Activated B cell treated with CpG ODN at 0.5 μM for 24 hours (primary cell): ENCODE measurements at regions of chr2 and their contacts with region 1.

Region 1: GRCh38 chr2:98412751-98413458 is 31.8 kb upstream of the INPP4A start:
- DNase-seq: no peak
- ATAC-seq: peak; percentile 86
- H3K4me3 Mint-ChIP-seq: no peak overlapping the region
- H3K27ac Mint-ChIP-seq: no peak overlapping the region
- H3K4me1 Mint-ChIP-seq: no peaks in the 10 kb centered on the region
- H3K27me3 Mint-ChIP-seq: peaks cover 2% of the 10 kb centered on the region
- CTCF ChIP-seq: no peak

Region 2: DNA sequence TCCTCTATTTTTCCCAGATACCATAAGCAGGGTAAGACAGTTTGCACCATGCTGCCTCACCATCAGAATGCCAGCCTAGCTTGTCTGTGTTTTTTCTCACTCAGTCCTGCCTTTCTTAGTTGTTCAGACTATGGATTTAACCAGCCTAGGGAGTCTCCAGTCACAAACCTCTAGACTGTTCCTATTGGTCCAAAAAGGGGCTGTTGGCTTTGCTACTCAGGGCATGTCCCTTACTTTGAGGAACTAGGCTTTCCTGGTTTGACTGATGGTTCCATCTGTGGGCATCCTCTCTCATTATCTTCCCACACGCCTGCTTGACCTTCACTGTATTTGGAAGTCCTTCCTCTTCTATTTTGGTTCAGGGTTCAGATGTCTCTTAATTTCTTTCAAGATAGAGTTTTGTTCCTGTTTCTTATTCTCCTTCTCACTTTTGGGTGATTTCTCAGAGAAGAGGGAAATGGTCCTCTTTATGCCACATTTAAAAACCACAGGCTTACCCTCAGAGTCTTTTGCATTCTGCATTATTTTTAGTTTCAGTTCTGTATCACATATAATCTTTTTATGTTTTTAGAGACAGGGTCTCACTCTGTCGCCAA is 385.9 kb before region 1 on chr2:
- CTCF ChIA-PET with region 1: no interaction called
- POLR2A ChIA-PET with region 1: no interaction called
- intact Hi-C with region 1: no loop called
- DNase-seq: no peak
- ATAC-seq: peak; percentile 72
- H3K4me3 Mint-ChIP-seq: peak overlapping the region; percentile 80
- H3K27ac Mint-ChIP-seq: peak overlapping the region; percentile 96
- H3K4me1 Mint-ChIP-seq: peaks cover 67% of the 10 kb centered on the region
- H3K27me3 Mint-ChIP-seq: no peaks in the 10 kb centered on the region
- CTCF ChIP-seq: no peak

Region 3: GRCh38 chr2:98385050-98385699 is 27.7 kb before region 1 on chr2:
- CTCF ChIA-PET with region 1: no interaction called
- POLR2A ChIA-PET with region 1: no interaction called
- intact Hi-C with region 1: no loop called
- DNase-seq: peak; percentile 58
- ATAC-seq: peak; percentile 78
- H3K4me3 Mint-ChIP-seq: no peak overlapping the region
- H3K27ac Mint-ChIP-seq: no peak overlapping the region
- H3K4me1 Mint-ChIP-seq: no peaks in the 10 kb centered on the region
- H3K27me3 Mint-ChIP-seq: peaks cover 10% of the 10 kb centered on the region
- CTCF ChIP-seq: peak; percentile 50

Region 4: DNA sequence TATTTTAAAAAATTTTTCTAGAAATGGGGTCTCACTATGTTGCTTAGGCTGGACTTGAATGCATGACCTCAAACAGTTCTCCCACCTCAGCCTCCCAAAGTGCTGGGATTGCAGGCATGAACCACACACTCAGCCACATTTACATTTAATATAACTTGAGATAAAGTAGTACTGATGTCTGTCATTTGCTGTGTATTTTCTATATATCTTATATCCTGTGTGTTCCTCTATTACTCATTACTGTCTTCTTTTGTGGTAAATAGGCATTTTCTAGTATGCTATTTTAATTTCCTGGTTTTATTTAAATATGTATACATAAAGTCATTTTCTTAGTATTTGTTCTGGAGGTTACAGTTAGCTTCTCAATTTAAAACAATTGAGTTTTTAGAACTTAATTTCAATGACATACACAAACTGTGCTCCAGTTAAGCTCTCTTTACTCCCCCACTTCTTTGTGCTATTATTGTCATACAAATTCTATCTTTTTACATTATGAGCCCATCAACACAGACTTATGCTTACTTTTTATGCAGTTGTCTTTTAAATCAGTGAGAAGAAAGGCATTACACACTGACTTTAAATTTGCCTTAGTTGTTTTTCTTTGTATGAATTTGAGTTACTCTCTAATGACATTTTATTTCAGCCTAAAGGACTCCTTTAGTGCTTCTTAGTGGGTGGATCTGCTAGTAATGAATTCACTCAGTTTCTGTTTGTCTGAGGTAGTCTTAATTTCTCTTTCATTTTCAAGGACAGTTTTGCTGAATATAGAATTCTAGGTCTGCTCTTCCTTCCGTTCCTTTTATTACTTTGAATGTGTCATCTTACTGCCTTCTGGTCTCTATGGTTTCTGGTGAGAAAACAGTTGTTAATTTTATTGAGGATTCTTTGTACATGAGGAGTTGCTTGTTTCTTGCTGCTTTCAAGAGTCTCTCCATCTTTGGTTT is 25.6 kb after region 1 on chr2:
- CTCF ChIA-PET with region 1: no interaction called
- POLR2A ChIA-PET with region 1: no interaction called
- intact Hi-C with region 1: no loop called
- DNase-seq: no peak
- ATAC-seq: no peak
- H3K4me3 Mint-ChIP-seq: no peak overlapping the region
- H3K27ac Mint-ChIP-seq: no peak overlapping the region
- H3K4me1 Mint-ChIP-seq: peaks cover under 1% of the 10 kb centered on the region
- H3K27me3 Mint-ChIP-seq: no peaks in the 10 kb centered on the region
- CTCF ChIP-seq: no peak

Region 5: GRCh38 chr2:98465456-98466226 is 52.7 kb after region 1 on chr2:
- CTCF ChIA-PET with region 1: no interaction called
- POLR2A ChIA-PET with region 1: no interaction called
- intact Hi-C with region 1: loop called (anchors 2 kb)
- DNase-seq: no peak
- ATAC-seq: peak; percentile 13
- H3K4me3 Mint-ChIP-seq: peak overlapping the region; percentile 56
- H3K27ac Mint-ChIP-seq: peak overlapping the region; percentile 94
- H3K4me1 Mint-ChIP-seq: peaks cover 70% of the 10 kb centered on the region
- H3K27me3 Mint-ChIP-seq: no peaks in the 10 kb centered on the region
- CTCF ChIP-seq: no peak

Region 6: DNA sequence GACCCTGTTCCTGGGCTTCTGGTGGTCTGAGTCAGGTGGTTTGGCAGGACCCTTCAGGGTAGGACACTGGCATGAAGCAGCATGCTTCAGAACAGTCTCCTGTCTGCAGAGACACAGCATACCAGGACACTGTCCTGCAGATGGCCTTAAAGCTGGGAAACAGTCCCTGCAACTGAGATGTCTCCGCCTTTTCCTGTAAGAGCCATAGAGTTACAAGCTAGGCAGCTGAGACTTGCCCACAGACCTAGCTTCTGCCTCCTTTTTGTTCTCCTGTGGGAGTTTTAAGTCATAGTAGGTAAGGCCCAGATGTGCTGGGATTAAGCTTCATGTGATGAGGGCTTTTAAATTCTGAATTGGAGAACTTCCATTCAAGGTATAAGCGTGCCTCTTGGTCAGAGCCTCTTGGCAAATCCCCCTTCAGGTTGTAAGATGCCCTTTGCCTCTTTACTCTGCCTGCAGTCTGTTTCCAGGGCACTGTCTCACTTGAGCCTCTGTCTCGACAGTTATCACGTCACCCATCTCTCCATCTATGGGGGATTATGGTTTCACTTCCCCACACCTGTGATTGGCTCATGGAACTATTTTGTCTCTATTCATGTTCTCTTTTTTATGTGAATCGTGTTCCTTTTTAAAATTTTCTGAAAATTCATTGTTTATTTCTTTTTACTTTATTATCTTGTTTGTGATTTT is 143.6 kb after region 1 on chr2:
- CTCF ChIA-PET with region 1: no interaction called
- POLR2A ChIA-PET with region 1: no interaction called
- intact Hi-C with region 1: loop called (anchors 5 kb)
- DNase-seq: no peak
- ATAC-seq: peak; percentile 99
- H3K4me3 Mint-ChIP-seq: no peak overlapping the region
- H3K27ac Mint-ChIP-seq: peak overlapping the region; percentile 71
- H3K4me1 Mint-ChIP-seq: peaks cover 39% of the 10 kb centered on the region
- H3K27me3 Mint-ChIP-seq: no peaks in the 10 kb centered on the region
- CTCF ChIP-seq: no peak

Region 7: DNA sequence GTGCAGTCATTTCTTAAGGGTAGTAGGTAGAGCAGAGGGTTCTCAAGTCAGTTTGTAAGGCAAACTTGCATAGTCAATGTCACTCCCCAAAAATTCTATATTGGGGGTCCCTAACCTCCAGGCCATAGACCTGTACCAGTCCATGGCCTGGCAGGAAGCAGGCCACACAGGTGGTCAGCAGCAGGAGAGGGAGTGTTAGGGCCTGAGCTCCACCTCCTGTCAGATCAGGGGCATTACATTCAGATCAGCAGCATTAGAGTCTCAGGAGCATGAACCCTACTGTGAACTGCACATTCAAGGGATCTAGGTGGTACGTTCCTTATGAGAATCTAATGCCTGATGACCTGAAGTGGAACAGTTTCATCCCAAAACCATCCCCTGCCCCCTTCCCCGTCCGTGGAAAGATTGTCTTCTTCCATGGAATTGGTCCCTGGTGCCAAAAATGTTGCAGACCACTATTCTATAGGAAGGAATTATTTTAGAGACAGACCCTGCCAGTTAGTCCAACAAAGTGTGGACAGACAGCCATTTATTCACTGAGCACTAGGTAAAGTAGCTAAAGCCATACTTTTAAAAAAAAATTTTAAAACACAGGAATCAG is 188.7 kb after region 1 on chr2:
- CTCF ChIA-PET with region 1: interaction called, 29 read pairs
- POLR2A ChIA-PET with region 1: no interaction called
- intact Hi-C with region 1: loop called (anchors 1 kb)
- DNase-seq: no peak
- ATAC-seq: peak; percentile 65
- H3K4me3 Mint-ChIP-seq: no peak overlapping the region
- H3K27ac Mint-ChIP-seq: no peak overlapping the region
- H3K4me1 Mint-ChIP-seq: peaks cover 22% of the 10 kb centered on the region
- H3K27me3 Mint-ChIP-seq: no peaks in the 10 kb centered on the region
- CTCF ChIP-seq: no peak

Region 8: DNA sequence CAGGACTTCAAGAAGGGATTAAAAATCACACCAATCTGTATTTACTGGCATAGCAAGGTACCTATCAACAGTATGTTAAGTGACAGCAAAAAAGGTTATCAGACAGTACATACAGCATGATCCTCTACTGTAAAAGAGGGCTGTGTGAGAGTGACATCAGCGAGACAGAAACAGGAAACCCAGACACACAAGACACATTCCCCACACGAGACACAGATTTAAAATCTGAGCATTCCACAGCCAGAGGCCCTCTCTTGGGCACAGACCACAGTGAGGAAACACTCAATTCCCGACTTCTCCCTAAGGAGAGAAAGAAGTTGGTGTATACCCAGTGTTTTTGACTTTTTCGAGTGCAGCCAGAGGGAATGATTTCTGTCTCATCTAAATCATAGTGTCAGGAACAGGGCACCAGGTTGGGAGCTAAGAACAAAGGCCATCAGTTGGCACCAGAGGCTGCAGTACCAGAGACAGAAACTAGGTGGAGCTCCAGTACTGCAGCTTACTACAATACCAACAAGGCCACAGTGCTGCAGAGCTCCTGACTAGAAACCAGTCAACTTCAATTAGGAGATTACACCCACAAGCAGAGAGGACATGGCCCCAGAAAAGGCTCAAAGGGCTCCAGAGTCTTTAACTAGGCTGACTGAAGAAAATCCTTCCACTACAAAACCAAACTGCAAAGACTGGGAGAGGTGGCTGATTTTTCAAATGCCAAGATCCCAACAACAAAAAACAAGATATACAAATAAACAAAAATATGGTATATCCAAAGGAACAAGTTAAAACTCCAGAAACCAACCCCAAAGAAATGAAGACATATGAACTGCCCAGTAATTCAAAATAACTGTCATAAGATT is 236.5 kb after region 1 on chr2:
- CTCF ChIA-PET with region 1: interaction called, 11 read pairs
- POLR2A ChIA-PET with region 1: no interaction called
- intact Hi-C with region 1: loop called (anchors 2 kb)
- DNase-seq: peak; percentile 46
- ATAC-seq: peak; percentile 99
- H3K4me3 Mint-ChIP-seq: no peak overlapping the region
- H3K27ac Mint-ChIP-seq: peak overlapping the region; percentile 18
- H3K4me1 Mint-ChIP-seq: peaks cover 19% of the 10 kb centered on the region
- H3K27me3 Mint-ChIP-seq: no peaks in the 10 kb centered on the region
- CTCF ChIP-seq: peak; percentile 99

Region 9: GRCh38 chr2:98768384-98769113 is 355.6 kb after region 1 on chr2:
- CTCF ChIA-PET with region 1: no interaction called
- POLR2A ChIA-PET with region 1: no interaction called
- intact Hi-C with region 1: no loop called
- DNase-seq: no peak
- ATAC-seq: no peak
- H3K4me3 Mint-ChIP-seq: no peak overlapping the region
- H3K27ac Mint-ChIP-seq: no peak overlapping the region
- H3K4me1 Mint-ChIP-seq: peaks cover 69% of the 10 kb centered on the region
- H3K27me3 Mint-ChIP-seq: peaks cover 7% of the 10 kb centered on the region
- CTCF ChIP-seq: no peak

Region 10: GRCh38 chr2:99066075-99066958 is 653.4 kb after region 1 on chr2:
- CTCF ChIA-PET with region 1: interaction called, 4 read pairs
- POLR2A ChIA-PET with region 1: no interaction called
- intact Hi-C with region 1: loop called (anchors 1 kb)
- DNase-seq: no peak
- ATAC-seq: peak; percentile 85
- H3K4me3 Mint-ChIP-seq: no peak overlapping the region
- H3K27ac Mint-ChIP-seq: no peak overlapping the region
- H3K4me1 Mint-ChIP-seq: no peaks in the 10 kb centered on the region
- H3K27me3 Mint-ChIP-seq: no peaks in the 10 kb centered on the region
- CTCF ChIP-seq: no peak